ENCODE measurements at regions of chr11 and their contacts with region 1.

Region 1: DNA sequence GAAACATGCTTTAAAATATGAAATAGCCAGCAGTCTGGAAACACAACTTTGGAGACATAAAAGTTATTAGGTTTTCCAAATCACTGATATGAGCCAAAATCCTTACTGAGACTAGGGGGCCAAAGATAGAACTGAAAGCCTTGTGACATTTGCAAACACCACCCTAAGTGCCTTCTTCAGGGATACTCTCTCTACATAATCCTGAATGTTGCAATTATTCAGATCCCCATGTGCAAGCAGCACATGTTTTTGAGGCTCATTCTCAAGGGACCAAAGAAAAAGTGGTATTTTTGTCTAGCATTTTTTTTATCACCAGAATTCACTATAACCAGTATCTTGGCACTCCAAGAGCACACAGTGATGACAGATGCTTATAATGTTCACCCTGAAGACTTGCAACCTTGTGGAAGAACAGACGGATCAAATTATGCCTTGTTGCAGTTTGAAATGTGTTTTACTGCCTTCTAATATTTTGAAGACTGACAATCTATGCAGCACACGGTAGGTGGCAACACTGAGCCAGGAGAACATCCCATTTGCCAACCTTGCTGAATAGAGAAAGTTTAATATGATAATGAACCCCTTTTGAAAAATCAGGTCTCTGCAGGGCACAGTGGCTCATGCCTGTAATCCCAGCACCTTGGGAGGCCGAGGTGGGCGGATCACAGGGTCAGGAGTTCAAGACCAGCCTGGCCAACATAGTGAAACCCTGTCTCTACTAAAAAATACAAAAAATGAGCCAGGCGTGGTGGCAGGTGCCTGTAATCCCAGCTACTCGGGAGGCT is 78.5 kb downstream of the PLEKHA7 start:
- DNase-seq: no peak
- H3K4me3 Mint-ChIP-seq: no peak overlapping the region
- H3K27ac Mint-ChIP-seq: no peak overlapping the region
- H3K4me1 Mint-ChIP-seq: no peaks in the 10 kb centered on the region
- H3K27me3 Mint-ChIP-seq: peaks cover 4% of the 10 kb centered on the region

Region 2: DNA sequence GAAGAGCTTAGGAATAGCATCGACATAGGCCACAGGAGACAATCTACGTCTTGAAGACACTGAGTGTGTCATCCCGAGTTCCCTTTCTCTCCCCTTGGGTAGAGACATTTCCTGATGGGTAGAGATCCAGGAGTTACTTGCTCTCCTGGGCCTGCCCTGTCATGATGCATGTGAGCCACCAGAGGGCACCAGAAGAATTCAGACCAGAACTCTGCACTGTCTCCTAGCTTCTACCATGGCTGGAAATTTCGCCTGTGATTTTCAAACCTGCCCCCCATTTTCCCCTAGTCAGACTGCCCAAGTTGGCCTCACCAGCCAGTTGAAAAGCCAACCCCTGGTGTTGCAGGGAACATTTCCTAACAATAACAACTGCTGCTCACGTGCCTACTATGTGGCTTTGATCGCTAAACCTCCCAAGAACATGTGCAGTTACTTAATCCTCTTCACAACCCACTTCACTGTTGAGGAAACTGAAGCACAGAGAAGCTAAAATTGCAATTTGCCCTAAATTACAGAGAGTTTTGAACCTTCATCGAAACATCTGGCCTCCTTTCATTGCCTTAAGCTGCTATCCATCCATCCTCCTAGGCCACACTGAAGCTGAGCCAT is 150.1 kb before region 1 on chr11:
- intact Hi-C with region 1: loop called (anchors 1 kb)
- DNase-seq: peak; percentile 31
- H3K4me3 Mint-ChIP-seq: no peak overlapping the region
- H3K27ac Mint-ChIP-seq: no peak overlapping the region
- H3K4me1 Mint-ChIP-seq: no peaks in the 10 kb centered on the region
- H3K27me3 Mint-ChIP-seq: peaks cover 2% of the 10 kb centered on the region

Measured in activated T-helper 1 cell treated with anti-CD3 and anti-CD28 coated beads, Interleukin-12 subunit alpha, Interleukin-12 subunit beta, Interleukin-2, Interleukin-4 antibody, amounts not matched to agents 30 ng/mL and 10 ng/mL and 1 ng/mL, durations not matched to agents 14 hours and 24 hours and 36 hours (primary cell).